Activated CD4-positive, alpha-beta T cell treated with anti-CD3 and anti-CD28 coated beads for 36 hours (primary cell): ENCODE measurements at regions of chr13 and their contacts with region 1.

Region 1: DNA sequence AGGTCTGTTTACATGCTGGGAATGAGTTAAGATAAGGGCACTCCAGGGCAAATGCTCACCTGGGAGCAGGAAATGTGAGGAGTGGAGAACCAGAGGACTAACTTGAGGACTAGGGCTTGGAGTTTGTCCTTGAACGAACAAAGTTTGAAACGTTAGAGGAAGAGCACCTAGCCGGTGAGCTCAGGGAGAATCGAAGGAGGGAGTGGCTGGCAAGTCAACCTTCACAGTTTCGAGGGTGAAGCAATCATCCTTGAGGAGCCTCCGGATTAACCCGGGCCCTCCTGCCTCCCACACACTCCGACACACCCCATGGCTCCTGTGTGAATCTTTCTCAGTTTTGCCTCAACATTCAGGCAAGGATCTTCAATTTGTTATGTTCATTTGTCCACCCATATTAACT is 58.6 kb downstream of the LMO7 start:
- DNase-seq: no peak
- ATAC-seq: no peak
- H3K4me3 Mint-ChIP-seq: no peak overlapping the region
- H3K27ac Mint-ChIP-seq: no peak overlapping the region
- H3K4me1 Mint-ChIP-seq: no peaks in the 10 kb centered on the region
- H3K27me3 Mint-ChIP-seq: no peaks in the 10 kb centered on the region

Region 2: DNA sequence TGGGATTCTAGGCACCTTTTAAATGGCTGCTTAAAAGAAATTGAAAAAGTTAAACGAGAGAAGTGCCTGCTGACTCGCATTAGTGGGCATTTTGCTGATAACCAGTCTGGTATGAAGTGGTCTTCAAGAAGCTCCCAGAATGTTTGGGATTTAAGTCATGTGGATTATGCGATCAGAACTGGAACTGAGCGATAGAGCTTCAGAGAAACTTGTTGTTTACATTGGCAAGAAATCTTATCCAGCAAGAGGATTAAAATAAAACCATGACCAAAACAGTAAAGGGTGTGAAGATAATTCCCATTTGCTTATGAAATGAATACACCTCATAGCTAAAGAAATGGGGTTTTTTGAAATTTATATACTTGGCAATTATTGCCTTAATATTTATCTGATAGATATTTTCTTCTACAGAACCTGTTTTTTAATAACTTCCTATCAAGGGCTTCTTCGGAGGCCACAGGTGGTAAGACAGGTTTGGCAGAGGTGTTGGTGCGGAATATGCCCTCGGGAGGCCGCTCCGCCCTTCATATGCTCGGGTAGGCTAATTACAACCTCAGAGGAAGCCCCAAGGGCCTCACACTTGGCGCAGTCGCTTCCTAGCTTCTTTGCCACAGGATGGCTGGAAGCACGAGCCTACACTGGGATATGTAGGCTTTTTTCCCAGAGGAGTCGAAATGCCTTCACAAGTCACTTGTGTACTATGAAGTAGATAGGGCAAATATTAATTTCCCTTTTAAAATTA is 10.0 kb after region 1 on chr13:
- CTCF ChIA-PET with region 1: interaction called, 22 read pairs
- POLR2A ChIA-PET with region 1: no interaction called
- intact Hi-C with region 1: no loop called
- DNase-seq: no peak
- ATAC-seq: no peak
- H3K4me3 Mint-ChIP-seq: no peak overlapping the region
- H3K27ac Mint-ChIP-seq: no peak overlapping the region
- H3K4me1 Mint-ChIP-seq: peaks cover 16% of the 10 kb centered on the region
- H3K27me3 Mint-ChIP-seq: no peaks in the 10 kb centered on the region

Region 3: DNA sequence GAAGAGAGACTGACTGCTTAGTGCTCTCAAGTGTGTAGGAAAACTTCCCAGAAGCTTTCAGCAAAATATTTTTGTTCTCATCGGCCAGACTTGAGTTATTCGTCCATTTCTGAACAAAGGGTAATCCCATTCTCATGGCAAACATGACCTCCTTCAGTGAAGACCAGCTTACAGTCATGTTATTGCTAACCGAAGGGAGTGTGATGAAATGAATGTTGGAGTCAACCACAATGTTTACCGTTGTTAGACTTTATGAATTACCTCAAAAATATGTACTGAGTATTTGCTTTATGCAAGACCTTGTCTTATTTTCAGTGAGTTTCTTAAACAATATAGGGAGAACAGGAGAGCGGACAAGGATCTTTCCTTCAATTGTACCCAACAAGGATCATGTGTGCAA is 170.0 kb after region 1 on chr13:
- CTCF ChIA-PET with region 1: interaction called, 56 read pairs
- POLR2A ChIA-PET with region 1: interaction called, 3 read pairs
- intact Hi-C with region 1: no loop called
- DNase-seq: no peak
- ATAC-seq: no peak
- H3K4me3 Mint-ChIP-seq: no peak overlapping the region
- H3K27ac Mint-ChIP-seq: no peak overlapping the region
- H3K4me1 Mint-ChIP-seq: peaks cover 2% of the 10 kb centered on the region
- H3K27me3 Mint-ChIP-seq: peaks cover 5% of the 10 kb centered on the region

Region 4: DNA sequence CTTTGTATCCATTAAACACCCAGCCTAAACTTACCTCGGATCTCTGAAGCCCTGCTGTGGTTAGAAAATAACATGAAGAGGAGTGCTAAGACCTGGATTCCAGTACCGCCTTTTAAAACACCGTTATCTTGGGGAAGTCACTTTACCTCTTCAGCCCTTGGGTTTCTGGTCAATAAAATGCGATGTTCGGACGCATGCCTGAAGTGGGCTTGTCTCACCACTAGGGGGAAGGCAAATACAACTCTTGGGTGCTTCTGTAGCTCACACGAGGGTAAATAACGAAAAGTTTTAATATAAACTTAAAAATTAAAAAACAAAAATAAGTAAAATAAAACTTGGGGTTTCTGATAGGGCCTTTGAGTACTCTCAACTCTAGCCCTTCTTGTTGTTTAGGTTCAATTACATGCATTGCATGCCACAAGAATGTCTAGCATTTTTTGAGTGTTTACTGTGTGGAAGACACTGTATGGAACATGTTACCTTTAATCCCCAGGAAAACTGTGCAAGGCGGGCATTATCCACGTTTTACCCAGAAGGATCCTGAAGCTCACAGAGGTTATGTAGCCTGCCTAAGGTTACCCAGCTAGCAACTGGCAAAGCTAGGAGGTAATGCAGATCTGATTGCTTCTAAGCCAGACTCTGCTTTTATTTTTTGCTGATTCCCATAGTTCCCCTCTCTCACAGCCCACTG is 181.8 kb after region 1 on chr13:
- CTCF ChIA-PET with region 1: interaction called, 56 read pairs
- POLR2A ChIA-PET with region 1: no interaction called
- intact Hi-C with region 1: no loop called
- DNase-seq: peak; percentile 71
- ATAC-seq: peak; percentile 90
- H3K4me3 Mint-ChIP-seq: no peak overlapping the region
- H3K27ac Mint-ChIP-seq: no peak overlapping the region
- H3K4me1 Mint-ChIP-seq: peaks cover 13% of the 10 kb centered on the region
- H3K27me3 Mint-ChIP-seq: peaks cover 3% of the 10 kb centered on the region

Region 5: GRCh38 chr13:76339649-76340048 is 644.9 kb after region 1 on chr13:
- CTCF ChIA-PET with region 1: no interaction called
- POLR2A ChIA-PET with region 1: no interaction called
- intact Hi-C with region 1: no loop called
- DNase-seq: no peak
- ATAC-seq: no peak
- H3K4me3 Mint-ChIP-seq: no peak overlapping the region
- H3K27ac Mint-ChIP-seq: no peak overlapping the region
- H3K4me1 Mint-ChIP-seq: no peaks in the 10 kb centered on the region
- H3K27me3 Mint-ChIP-seq: no peaks in the 10 kb centered on the region

Region 6: GRCh38 chr13:76473552-76474134 is 778.9 kb after region 1 on chr13:
- CTCF ChIA-PET with region 1: interaction called, 7 read pairs
- POLR2A ChIA-PET with region 1: no interaction called
- intact Hi-C with region 1: loop called (anchors 1 kb)
- DNase-seq: peak; percentile 84
- ATAC-seq: peak; percentile 93
- H3K4me3 Mint-ChIP-seq: no peak overlapping the region
- H3K27ac Mint-ChIP-seq: no peak overlapping the region
- H3K4me1 Mint-ChIP-seq: no peaks in the 10 kb centered on the region
- H3K27me3 Mint-ChIP-seq: peaks cover 4% of the 10 kb centered on the region